H1 (cell line): ENCODE measurements at regions of chr19 and their contacts with region 1.

Region 1: GRCh38 chr19:6048808-6049405 is 61.4 kb downstream of the RFX2 start:
- DNase-seq: peak in 1 of 2 experiments; percentile 80
- H3K4me3 ChIP-seq: no peak overlapping the region; a peak in 1 of 8 replicates
- H3K27ac ChIP-seq: no peak overlapping the region
- H3K4me1 ChIP-seq: no peaks in the 10 kb centered on the region
- H3K27me3 ChIP-seq: no peaks in the 10 kb centered on the region; a peak in 1 of 7 replicates
- CTCF ChIP-seq: peak; percentile 77 to 95 (median 84)
- EP300 ChIP-seq: no peak
- POLR2A ChIP-seq: no peak
- RAD21 ChIP-seq: peak; percentile 94 to 95

Region 2: DNA sequence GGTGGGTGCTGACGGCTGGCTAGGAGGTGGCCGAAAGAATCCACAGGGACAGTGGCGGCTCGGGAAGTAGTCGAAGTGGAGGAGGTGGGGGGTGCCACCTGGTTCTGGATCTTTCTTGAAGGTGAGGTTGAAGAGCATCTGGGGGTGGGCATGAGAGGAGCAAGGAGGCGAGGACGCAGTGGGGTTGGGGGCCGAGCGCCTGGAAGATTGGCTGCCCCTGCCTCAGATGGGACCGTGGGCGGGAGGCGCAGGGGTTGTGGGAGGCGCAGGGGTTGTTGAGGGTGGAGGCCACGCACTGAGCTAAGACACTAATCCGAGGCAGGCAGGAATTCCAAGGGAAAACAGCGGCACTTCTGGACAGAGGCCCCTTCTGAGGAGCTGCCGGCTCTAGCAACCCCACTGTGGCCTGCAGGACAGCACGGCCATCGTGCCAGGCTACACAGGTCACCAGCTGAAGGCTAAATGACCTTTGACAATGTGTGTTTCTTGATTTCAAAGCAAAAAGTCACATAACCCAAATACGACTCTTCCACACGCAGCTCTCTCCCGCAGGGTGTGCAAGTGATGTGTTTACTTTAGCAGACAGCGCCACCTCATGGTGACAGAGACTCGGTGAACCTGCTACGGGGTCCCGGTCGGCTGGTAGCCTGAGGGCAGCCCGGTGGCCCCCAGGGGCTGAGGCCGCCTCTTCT is 26.9 kb before region 1 on chr19:
- CTCF ChIA-PET with region 1: interaction called, 13 read pairs
- POLR2A ChIA-PET with region 1: no interaction called
- DNase-seq: peak; percentile 46 to 95
- H3K4me3 ChIP-seq: no peak overlapping the region; a peak in 2 of 8 replicates
- H3K27ac ChIP-seq: no peak overlapping the region
- H3K4me1 ChIP-seq: peaks cover 0 to 6% (median 0%) of the 10 kb centered on the region in 4 experiments; a peak in 2 of 7 replicates
- H3K27me3 ChIP-seq: peaks cover 0 to 4% (median under 1%) of the 10 kb centered on the region in 4 experiments; a peak in 4 of 7 replicates
- CTCF ChIP-seq: peak; percentile 84 to 93 (median 85)
- EP300 ChIP-seq: no peak
- POLR2A ChIP-seq: no peak
- RAD21 ChIP-seq: peak; percentile 91 to 92

Region 3: DNA sequence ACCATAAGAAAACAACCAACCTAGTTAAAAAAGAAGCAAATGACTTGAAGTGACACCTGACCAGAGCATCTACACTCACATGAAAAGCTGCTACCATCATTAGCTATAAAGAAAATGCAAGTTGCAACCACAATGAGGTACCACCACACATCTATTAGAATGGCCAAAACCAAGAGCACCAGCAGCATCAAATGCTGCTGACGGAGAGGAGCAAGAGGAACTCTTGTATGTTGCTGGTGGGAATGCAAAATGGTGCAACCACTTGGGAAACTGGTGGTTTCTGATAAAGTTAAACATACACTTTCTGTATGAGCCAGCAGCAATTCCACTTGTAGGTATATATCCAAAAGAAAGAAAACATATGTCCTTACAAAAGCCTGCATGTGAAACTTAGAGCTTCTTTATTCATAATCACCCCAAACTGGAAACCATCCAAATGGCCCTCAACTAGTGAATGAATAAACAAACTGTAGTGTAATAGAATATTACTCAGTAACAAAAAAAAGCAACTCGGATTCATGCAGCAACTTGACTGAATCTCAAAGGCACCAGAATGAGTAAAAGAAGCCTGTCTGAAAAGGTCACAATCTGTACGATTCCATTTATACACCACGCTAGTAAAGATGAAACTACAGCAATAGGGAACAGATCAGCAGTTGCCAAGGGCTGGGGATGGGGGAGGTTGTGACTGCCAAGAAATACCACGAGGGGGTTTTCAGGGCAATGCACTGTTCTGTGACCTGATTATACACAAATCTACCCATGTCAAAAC is 10.1 kb before region 1 on chr19:
- CTCF ChIA-PET with region 1: interaction called, 16 read pairs
- POLR2A ChIA-PET with region 1: no interaction called
- DNase-seq: no peak
- H3K4me3 ChIP-seq: no peak overlapping the region
- H3K27ac ChIP-seq: no peak overlapping the region
- H3K4me1 ChIP-seq: no peaks in the 10 kb centered on the region
- H3K27me3 ChIP-seq: no peaks in the 10 kb centered on the region
- CTCF ChIP-seq: no peak
- EP300 ChIP-seq: no peak
- POLR2A ChIP-seq: no peak
- RAD21 ChIP-seq: no peak

Region 4: GRCh38 chr19:6065685-6066374 is 16.9 kb after region 1 on chr19:
- CTCF ChIA-PET with region 1: interaction called, 17 read pairs
- POLR2A ChIA-PET with region 1: no interaction called
- DNase-seq: no peak
- H3K4me3 ChIP-seq: no peak overlapping the region
- H3K27ac ChIP-seq: peak overlapping the region; percentile 80
- H3K4me1 ChIP-seq: peaks cover 3 to 6% (median 4%) of the 10 kb centered on the region in 4 experiments; a peak in 6 of 7 replicates
- H3K27me3 ChIP-seq: no peaks in the 10 kb centered on the region
- CTCF ChIP-seq: no peak
- EP300 ChIP-seq: no peak
- POLR2A ChIP-seq: peak in 1 of 2 experiments; percentile 23; a peak in 1 of 3 replicates
- RAD21 ChIP-seq: no peak

Region 5: GRCh38 chr19:6092329-6093286 is 43.7 kb after region 1 on chr19:
- CTCF ChIA-PET with region 1: interaction called, 14 read pairs
- POLR2A ChIA-PET with region 1: no interaction called
- DNase-seq: peak in 1 of 2 experiments; percentile 34
- H3K4me3 ChIP-seq: peak overlapping the region; percentile 11 to 57 (median 36); a peak in 6 of 8 replicates
- H3K27ac ChIP-seq: no peak overlapping the region
- H3K4me1 ChIP-seq: peaks cover 0 to 11% (median 8%) of the 10 kb centered on the region in 4 experiments; a peak in 5 of 7 replicates
- H3K27me3 ChIP-seq: peaks cover 0 to 15% (median 13%) of the 10 kb centered on the region in 4 experiments; a peak in 6 of 7 replicates
- CTCF ChIP-seq: no peak
- EP300 ChIP-seq: no peak
- POLR2A ChIP-seq: no peak
- RAD21 ChIP-seq: no peak

Region 6: GRCh38 chr19:6110360-6110977 is 61.6 kb after region 1 on chr19 and contains the start of gene RFX2:
- CTCF ChIA-PET with region 1: interaction called, 25 read pairs
- POLR2A ChIA-PET with region 1: interaction called, 3 read pairs
- DNase-seq: peak; percentile 91 to 97
- H3K4me3 ChIP-seq: peak within 1 kb of the TSS; percentile 68 to 86 (median 70)
- H3K27ac ChIP-seq: no peak within 1 kb of the TSS
- H3K4me1 ChIP-seq: no peaks in the 10 kb centered on the region; a peak in 2 of 7 replicates
- H3K27me3 ChIP-seq: peaks cover 11 to 26% (median 22%) of the 10 kb centered on the region in 4 experiments
- CTCF ChIP-seq: no peak
- EP300 ChIP-seq: 0 out of 3 replicates have a peak, but pooled peaks of 1 of the 2 experiments have one; percentile 29
- POLR2A ChIP-seq: no peak; a peak in 1 of 3 replicates
- RAD21 ChIP-seq: no peak
- total RNA-seq, gene RFX2: 4.8 and 5.5 TPM in 2 replicates

Region 7: GRCh38 chr19:6125571-6125989 is 76.7 kb after region 1 on chr19:
- CTCF ChIA-PET with region 1: interaction called, 47 read pairs
- POLR2A ChIA-PET with region 1: interaction called, 3 read pairs
- DNase-seq: peak; percentile 47 to 56
- H3K4me3 ChIP-seq: no peak overlapping the region
- H3K27ac ChIP-seq: no peak overlapping the region
- H3K4me1 ChIP-seq: no peaks in the 10 kb centered on the region
- H3K27me3 ChIP-seq: no peaks in the 10 kb centered on the region; a peak in 1 of 7 replicates
- CTCF ChIP-seq: peak; percentile 74 to 92 (median 87)
- EP300 ChIP-seq: no peak
- POLR2A ChIP-seq: no peak
- RAD21 ChIP-seq: peak; percentile 86 to 90